Activated CD8-positive, alpha-beta T cell treated with anti-CD3 and anti-CD28 coated beads, Interleukin-2, amount 10 ng/mL, durations not matched to agents 7 days and 5 days (primary cell): ENCODE measurements at regions of chr12 and their contacts with region 1.

Region 1: DNA sequence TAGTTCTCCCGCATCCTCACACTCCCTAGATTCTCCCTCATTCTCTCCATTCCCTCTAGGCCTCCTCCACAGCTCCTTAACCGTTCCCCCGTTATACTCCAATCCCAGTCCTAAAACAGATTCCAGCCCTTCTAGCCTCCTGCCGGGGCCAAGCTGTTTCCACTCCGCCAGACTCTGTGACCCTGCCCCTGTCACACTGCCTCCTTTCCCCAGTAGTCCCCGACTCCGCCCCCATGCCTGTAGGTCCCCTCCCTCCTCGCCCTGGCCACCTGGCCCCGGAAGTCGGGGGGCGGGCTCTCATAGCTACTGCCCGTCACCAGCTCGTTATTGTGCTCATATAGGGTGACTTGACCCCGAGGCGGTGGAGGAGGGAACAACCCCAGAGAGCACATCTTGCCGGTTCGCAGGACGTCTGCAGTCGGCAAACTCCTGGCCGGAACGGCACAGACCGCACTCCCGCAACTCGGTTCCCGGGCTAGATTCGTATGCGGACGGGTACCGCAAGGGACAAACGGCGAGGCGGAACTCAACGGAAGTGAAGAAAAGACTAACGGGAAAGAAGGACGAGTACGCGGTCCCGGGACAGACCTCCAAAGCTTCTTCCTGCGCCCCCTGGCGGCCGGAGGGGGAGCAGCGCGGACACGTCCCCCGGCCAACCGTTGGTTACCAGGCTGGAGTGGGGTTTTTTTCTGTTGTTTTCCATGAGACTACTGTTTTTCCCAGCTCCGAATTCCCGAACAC is at the start of gene AAAS:
- DNase-seq: peak; percentile 98
- ATAC-seq: peak; percentile 87
- H3K4me3 Mint-ChIP-seq: peak within 1 kb of the TSS; percentile 92
- H3K27ac Mint-ChIP-seq: peak within 1 kb of the TSS; percentile 96
- H3K4me1 Mint-ChIP-seq: peaks cover 47% of the 10 kb centered on the region
- H3K27me3 Mint-ChIP-seq: no peaks in the 10 kb centered on the region
- total RNA-seq, gene AAAS: 67.5 to 67.9 TPM

Region 2: GRCh38 chr12:52956987-52957386 is 364.3 kb before region 1 on chr12:
- CTCF ChIA-PET with region 1: no interaction called
- POLR2A ChIA-PET with region 1: no interaction called
- DNase-seq: no peak
- ATAC-seq: no peak
- H3K4me3 Mint-ChIP-seq: no peak overlapping the region
- H3K27ac Mint-ChIP-seq: no peak overlapping the region
- H3K4me1 Mint-ChIP-seq: peaks cover 3% of the 10 kb centered on the region
- H3K27me3 Mint-ChIP-seq: peaks cover 2% of the 10 kb centered on the region

Region 3: GRCh38 chr12:53065975-53066931 is 255.0 kb before region 1 on chr12:
- CTCF ChIA-PET with region 1: interaction called, 10 read pairs
- POLR2A ChIA-PET with region 1: no interaction called
- DNase-seq: peak; percentile 79
- ATAC-seq: peak; percentile 79
- H3K4me3 Mint-ChIP-seq: no peak overlapping the region
- H3K27ac Mint-ChIP-seq: peak overlapping the region; percentile 69
- H3K4me1 Mint-ChIP-seq: peaks cover 7% of the 10 kb centered on the region
- H3K27me3 Mint-ChIP-seq: no peaks in the 10 kb centered on the region

Region 4: DNA sequence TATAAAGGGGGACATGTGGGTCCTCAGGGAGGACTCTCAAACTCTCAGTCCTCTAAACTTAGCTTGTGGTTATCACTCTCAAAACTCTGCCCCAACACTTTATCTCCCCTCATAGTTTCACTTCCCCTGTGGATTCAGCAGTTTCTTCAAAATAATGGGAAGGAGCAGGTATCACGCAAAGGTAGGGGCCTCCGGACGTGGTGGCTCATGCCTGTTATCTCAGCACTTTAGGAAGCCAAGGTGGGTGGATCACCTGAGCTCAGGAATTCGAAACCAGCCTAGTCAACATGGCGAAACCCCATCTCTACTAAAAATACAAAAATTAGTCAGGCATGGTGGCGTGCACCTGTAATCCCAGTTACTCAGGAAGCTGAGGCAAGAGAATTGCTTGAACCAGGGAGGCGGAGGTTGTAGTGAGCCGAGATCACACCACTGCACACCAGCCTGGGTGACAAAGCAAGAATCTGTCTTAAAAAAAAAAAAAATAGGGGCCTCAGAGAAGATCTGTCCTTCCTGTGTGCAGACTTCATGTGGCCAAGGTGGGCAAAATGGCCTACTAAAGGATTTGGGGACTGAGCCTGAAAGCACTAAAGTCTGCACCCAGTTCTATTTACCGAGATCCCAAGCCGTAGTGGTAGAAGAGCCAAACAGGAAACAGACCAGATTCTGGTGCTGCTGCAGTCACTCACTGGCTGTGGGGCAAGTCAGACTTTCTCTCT is 120.6 kb before region 1 on chr12:
- CTCF ChIA-PET with region 1: interaction called, 18 read pairs
- POLR2A ChIA-PET with region 1: no interaction called
- DNase-seq: peak; percentile 57
- ATAC-seq: peak; percentile 44
- H3K4me3 Mint-ChIP-seq: peak overlapping the region; percentile 68
- H3K27ac Mint-ChIP-seq: peak overlapping the region; percentile 88
- H3K4me1 Mint-ChIP-seq: peaks cover 79% of the 10 kb centered on the region
- H3K27me3 Mint-ChIP-seq: no peaks in the 10 kb centered on the region

Region 5: DNA sequence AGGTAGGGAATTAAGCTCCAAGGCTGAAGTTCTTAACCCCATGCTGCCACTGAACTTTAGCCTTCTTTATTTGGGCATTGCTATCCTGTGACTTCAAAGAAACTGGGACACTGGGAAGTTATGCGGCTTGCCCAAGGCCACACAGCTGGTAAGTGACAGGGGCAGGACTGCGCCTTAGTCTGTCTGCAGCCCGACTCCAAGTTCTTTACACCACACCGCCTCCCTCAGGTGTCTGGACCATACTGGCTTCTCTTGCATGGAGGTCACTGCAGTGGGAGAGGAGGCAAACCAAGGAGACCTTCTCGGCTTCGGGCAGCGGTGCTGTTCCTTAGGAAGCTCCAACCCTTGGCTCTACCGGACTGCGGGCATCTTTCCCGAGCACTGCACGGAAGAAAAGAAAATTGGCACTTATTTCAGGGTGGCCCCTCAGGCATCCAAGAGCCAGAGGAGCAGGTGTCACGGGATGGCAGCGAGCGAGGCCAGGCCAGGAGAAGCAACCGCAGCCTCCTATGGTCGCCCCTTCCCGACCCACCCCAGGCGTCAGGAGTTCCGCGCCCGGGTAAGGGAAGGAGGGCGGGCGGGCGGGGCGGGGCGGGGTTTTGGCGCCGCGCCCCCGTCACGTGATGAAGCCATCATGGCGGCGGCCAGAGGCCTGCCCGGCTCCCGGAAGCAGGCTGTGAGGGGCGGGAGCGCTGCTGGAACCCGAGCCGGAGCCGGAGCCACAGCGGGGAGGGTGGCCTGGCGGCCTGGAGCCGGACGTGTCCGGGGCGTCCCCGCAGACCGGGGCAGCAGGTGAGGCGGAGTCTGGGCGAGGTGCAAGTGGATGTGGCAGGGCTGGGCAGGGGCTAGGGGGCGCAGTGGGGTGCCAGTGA is 69.5 kb before region 1 on chr12:
- CTCF ChIA-PET with region 1: interaction called, 10 read pairs
- POLR2A ChIA-PET with region 1: no interaction called
- DNase-seq: peak; percentile 74
- ATAC-seq: peak; percentile 87
- H3K4me3 Mint-ChIP-seq: peak overlapping the region; percentile 99
- H3K27ac Mint-ChIP-seq: peak overlapping the region; percentile 94
- H3K4me1 Mint-ChIP-seq: peaks cover 54% of the 10 kb centered on the region
- H3K27me3 Mint-ChIP-seq: peaks cover 3% of the 10 kb centered on the region

Region 6: DNA sequence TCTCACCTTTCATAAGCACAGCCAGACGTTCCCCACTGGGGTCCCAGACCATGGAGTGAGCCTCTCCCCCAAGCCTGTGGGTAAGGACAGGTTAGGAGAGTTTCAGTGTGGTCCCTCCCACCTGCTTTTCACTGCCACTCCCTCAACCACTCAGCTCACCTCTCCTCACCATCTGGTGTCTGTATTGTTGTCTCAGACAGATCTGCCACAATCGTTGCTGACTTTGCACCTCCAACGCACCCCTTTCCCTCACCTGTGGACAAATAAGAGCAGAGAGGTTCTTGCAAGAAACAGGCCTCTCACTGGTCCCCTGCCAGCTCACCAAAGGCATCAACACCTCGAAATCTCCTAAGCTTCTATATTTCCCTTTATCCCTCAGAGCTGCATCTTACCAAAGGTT is 13.0 kb before region 1 on chr12:
- CTCF ChIA-PET with region 1: interaction called, 204 read pairs
- POLR2A ChIA-PET with region 1: interaction called, 3 read pairs
- DNase-seq: no peak
- ATAC-seq: no peak
- H3K4me3 Mint-ChIP-seq: no peak overlapping the region
- H3K27ac Mint-ChIP-seq: peak overlapping the region; percentile 24
- H3K4me1 Mint-ChIP-seq: peaks cover 3% of the 10 kb centered on the region
- H3K27me3 Mint-ChIP-seq: no peaks in the 10 kb centered on the region

Region 7: DNA sequence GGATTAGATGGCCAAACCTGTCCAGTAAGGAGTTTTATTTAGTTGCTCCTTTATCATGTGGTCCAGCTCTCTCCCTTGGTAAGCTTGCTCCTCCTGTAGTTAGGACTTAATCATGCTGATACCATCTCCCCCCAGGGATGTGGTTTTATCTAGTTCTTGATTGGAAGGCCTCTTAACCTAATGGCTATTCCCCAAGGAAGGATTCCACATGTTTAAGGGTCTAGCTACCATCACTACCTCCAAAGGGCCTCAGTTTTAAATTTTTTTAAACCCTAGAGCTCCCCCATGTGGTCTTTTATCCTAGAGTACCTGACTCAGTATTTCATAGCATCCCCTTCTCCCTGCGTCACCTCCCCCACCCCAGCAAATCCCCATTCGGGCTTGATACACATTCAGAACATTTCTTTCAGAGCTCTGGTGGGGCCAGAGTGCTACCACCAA is 155.5 kb after region 1 on chr12:
- CTCF ChIA-PET with region 1: interaction called, 20 read pairs
- POLR2A ChIA-PET with region 1: no interaction called
- DNase-seq: no peak
- ATAC-seq: no peak
- H3K4me3 Mint-ChIP-seq: no peak overlapping the region
- H3K27ac Mint-ChIP-seq: peak overlapping the region; percentile 43
- H3K4me1 Mint-ChIP-seq: peaks cover 40% of the 10 kb centered on the region
- H3K27me3 Mint-ChIP-seq: no peaks in the 10 kb centered on the region

Region 8: GRCh38 chr12:53696285-53696654 is 375.0 kb after region 1 on chr12:
- CTCF ChIA-PET with region 1: no interaction called
- POLR2A ChIA-PET with region 1: no interaction called
- DNase-seq: no peak
- ATAC-seq: no peak
- H3K4me3 Mint-ChIP-seq: no peak overlapping the region
- H3K27ac Mint-ChIP-seq: no peak overlapping the region
- H3K4me1 Mint-ChIP-seq: peaks cover 24% of the 10 kb centered on the region
- H3K27me3 Mint-ChIP-seq: peaks cover 77% of the 10 kb centered on the region